H1 (cell line): ENCODE measurements at regions of chr13 and their contacts with region 1.

Region 1: GRCh38 chr13:20902438-20903163 is at the start of gene XPO4:
- DNase-seq: peak in 1 of 2 experiments; percentile 94
- H3K4me3 ChIP-seq: peak within 1 kb of the TSS; percentile 90 to 99 (median 96)
- H3K27ac ChIP-seq: peak within 1 kb of the TSS; percentile 95
- H3K4me1 ChIP-seq: no peaks in the 10 kb centered on the region; a peak in 1 of 7 replicates
- H3K27me3 ChIP-seq: no peaks in the 10 kb centered on the region
- CTCF ChIP-seq: no peak
- EP300 ChIP-seq: no peak
- POLR2A ChIP-seq: peak in 1 of 2 experiments; percentile 94; a peak in 2 of 3 replicates
- RAD21 ChIP-seq: no peak
- total RNA-seq, gene XPO4: 33.3 and 35.5 TPM in 2 replicates

Region 2: GRCh38 chr13:20882206-20882605 is 20.4 kb before region 1 on chr13:
- CTCF ChIA-PET with region 1: interaction called, 3 read pairs
- POLR2A ChIA-PET with region 1: interaction called, 18 read pairs
- DNase-seq: peak in 1 of 2 experiments; percentile 49
- H3K4me3 ChIP-seq: peak overlapping the region in 2 of 4 experiments; percentile 17 to 36; a peak in 2 of 8 replicates
- H3K27ac ChIP-seq: 0 out of 2 replicates have a peak overlapping the region, but pooled peaks have one; percentile 6
- H3K4me1 ChIP-seq: peaks cover 0 to 10% (median 6%) of the 10 kb centered on the region in 4 experiments; a peak in 5 of 7 replicates
- H3K27me3 ChIP-seq: no peaks in the 10 kb centered on the region
- CTCF ChIP-seq: no peak
- EP300 ChIP-seq: no peak
- POLR2A ChIP-seq: no peak
- RAD21 ChIP-seq: no peak

Region 3: DNA sequence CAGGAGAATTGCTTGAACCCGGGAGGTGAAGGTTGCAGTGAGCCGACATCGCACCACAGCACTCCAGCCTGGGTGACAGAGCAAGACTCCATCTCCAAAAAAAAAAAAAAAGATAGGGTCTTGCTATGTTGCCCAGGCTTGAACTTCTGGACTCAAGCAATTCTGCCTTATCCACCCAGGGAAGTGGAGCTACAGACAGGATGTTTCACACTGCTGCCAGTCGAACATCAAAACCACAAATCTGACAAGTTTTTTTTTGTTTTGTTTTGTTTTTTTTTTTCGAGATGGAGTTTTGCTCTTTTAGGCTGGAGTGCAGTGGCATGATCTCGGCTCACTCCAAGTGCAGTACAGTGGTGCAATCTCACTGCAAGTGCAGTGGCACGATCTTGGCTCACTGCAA is 10.8 kb before region 1 on chr13:
- CTCF ChIA-PET with region 1: interaction called, 3 read pairs
- POLR2A ChIA-PET with region 1: interaction called, 22 read pairs
- DNase-seq: no peak
- H3K4me3 ChIP-seq: no peak overlapping the region
- H3K27ac ChIP-seq: no peak overlapping the region
- H3K4me1 ChIP-seq: no peaks in the 10 kb centered on the region
- H3K27me3 ChIP-seq: no peaks in the 10 kb centered on the region
- CTCF ChIP-seq: no peak
- EP300 ChIP-seq: no peak
- POLR2A ChIP-seq: no peak
- RAD21 ChIP-seq: no peak

Region 4: GRCh38 chr13:20924758-20925394 is 22.3 kb after region 1 on chr13:
- CTCF ChIA-PET with region 1: interaction called, 8 read pairs
- POLR2A ChIA-PET with region 1: interaction called, 10 read pairs
- DNase-seq: peak in 1 of 2 experiments; percentile 88
- H3K4me3 ChIP-seq: no peak overlapping the region
- H3K27ac ChIP-seq: no peak overlapping the region
- H3K4me1 ChIP-seq: peaks cover 0 to 4% (median under 1%) of the 10 kb centered on the region in 4 experiments; a peak in 1 of 7 replicates
- H3K27me3 ChIP-seq: no peaks in the 10 kb centered on the region
- CTCF ChIP-seq: peak in 2 of 3 experiments; percentile 69 to 77; a peak in 3 of 4 replicates
- EP300 ChIP-seq: no peak
- POLR2A ChIP-seq: no peak
- RAD21 ChIP-seq: peak; percentile 92

Region 5: GRCh38 chr13:20945952-20946383 is 43.4 kb after region 1 on chr13:
- CTCF ChIA-PET with region 1: no interaction called
- POLR2A ChIA-PET with region 1: no interaction called
- DNase-seq: peak; percentile 23 to 56
- H3K4me3 ChIP-seq: peak overlapping the region; percentile 0 to 57 (median 16); a peak in 5 of 8 replicates
- H3K27ac ChIP-seq: no peak overlapping the region
- H3K4me1 ChIP-seq: no peaks in the 10 kb centered on the region; a peak in 1 of 7 replicates
- H3K27me3 ChIP-seq: peaks cover 0 to 19% (median 10%) of the 10 kb centered on the region in 4 experiments; a peak in 6 of 7 replicates
- CTCF ChIP-seq: no peak
- EP300 ChIP-seq: no peak
- POLR2A ChIP-seq: no peak
- RAD21 ChIP-seq: no peak